Transverse colon (tissue), 4 donors: ENCODE measurements at regions of chr2 and their contacts with region 1.

Region 1: DNA sequence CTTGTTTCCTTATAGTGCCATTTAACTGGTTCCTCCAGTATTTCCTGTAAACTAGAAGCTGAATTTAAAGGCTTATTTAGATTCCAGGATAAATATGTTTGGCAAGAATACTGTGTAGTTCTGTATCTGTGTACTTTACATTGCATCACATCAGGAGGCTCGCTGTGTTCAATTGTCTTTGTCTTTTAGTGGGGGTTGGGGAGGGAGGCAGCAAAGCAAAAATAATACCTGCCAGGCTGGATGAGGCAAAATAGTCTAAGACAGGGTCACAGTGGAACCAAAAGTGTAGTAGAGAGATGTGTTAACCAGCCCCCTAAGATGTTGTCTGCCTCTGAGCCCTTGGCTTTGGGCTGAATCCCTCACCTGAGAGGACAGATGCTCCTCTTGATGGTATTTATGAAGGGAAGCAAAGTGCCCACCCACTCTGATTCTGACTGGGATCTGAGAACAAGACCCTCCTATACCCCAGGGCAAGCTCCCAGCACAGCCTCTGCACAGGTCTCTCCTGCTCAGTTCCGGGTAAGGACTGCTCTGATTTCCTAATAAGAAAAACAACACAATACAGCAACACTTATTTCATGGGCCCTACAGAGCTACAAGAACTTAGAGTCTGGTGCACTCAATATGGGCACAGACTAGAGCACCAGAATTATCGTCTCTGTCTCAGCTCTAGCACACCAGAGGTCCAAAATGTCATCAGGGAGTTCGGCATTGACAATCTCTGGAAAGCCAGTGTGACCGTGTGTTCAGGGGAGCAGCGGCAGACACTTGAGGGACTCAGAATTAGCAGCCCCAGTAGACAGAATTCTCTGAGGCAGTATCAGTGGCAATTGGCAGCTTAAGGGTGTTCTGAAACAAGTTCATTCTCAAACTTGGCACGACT is 7.3 kb upstream of the AFTPH start:
- DNase-seq: no peak
- H3K4me3 ChIP-seq: no peak overlapping the region
- H3K27ac ChIP-seq: no peak overlapping the region
- H3K4me1 ChIP-seq: no peaks in the 10 kb centered on the region
- H3K27me3 ChIP-seq: no peaks in the 10 kb centered on the region
- CTCF ChIP-seq: no peak
- EP300 ChIP-seq: no peak
- POLR2A ChIP-seq: no peak

Region 2: DNA sequence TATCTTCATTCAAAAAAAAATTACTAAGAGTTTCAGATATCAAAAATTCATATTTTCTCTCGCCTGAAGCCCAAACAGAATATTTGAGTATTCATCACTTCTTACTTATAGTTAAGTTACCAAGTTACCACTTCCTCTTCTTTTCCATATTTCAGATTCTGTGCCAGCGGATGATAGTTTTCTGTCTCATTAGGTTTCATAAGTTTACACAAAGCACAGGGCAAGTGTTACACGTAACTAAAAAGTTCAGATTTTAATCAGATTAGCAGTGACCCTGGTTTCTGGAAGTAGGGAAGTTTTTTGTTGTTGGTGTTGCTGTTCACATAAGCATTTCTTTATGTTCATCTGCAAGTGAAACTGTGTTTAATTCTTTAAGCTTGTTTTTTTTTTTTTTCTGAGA is 17.5 kb after region 1 on chr2:
- in situ Hi-C with region 1: no loop called
- intact Hi-C with region 1: no loop called
- DNase-seq: no peak
- H3K4me3 ChIP-seq: no peak overlapping the region
- H3K27ac ChIP-seq: no peak overlapping the region
- H3K4me1 ChIP-seq: peaks cover 0 to 14% (median 2%) of the 10 kb centered on the region in 4 donors
- H3K27me3 ChIP-seq: no peaks in the 10 kb centered on the region
- CTCF ChIP-seq: no peak
- EP300 ChIP-seq: no peak
- POLR2A ChIP-seq: no peak

Region 3: DNA sequence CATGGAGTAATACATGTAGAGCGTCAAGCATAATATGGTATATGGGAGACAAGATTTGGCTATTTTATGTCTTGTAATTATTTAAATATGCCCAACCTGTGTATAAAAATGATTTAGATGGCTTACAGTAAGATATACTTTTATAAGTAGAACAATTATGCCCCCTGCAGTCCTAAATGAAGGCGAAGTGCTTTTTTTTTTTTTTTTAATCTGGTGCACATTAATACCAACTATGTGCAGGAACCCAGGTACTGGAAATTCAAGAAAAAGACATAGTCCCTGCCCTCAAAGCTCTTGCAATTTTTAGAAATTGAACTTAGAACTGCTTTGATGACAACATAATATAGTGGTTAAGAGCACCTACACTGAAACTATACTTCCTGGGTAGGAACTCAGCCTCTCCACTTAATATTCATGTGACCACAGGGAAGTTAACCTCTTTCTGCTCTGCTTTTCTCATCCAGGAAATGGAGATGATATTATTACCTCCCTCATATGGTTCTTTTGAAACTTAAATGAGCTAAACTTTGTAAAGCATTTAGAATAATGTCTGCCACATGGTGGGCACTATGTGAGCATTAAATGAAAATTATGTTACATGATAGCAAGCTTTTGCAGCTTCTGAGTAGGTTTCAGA is 45.4 kb after region 1 on chr2:
- in situ Hi-C with region 1: loop called in 1 of 4 experiments (anchors 10 kb)
- intact Hi-C with region 1: no loop called
- DNase-seq: no peak
- H3K4me3 ChIP-seq: no peak overlapping the region
- H3K27ac ChIP-seq: no peak overlapping the region
- H3K4me1 ChIP-seq: peaks cover 0 to 14% (median 2%) of the 10 kb centered on the region in 4 donors
- H3K27me3 ChIP-seq: no peaks in the 10 kb centered on the region
- CTCF ChIP-seq: peak in 4 of 5 experiments; percentile 34 to 51 (median 39)
- EP300 ChIP-seq: no peak
- POLR2A ChIP-seq: no peak